SK-N-SH (cell line): ENCODE measurements at regions of chr1 and their contacts with region 1.

Region 1: GRCh38 chr1:10788592-10789006 is 7.8 kb downstream of the CASZ1 start:
- DNase-seq: peak; percentile 86
- H3K4me3 ChIP-seq: no peak overlapping the region
- H3K27ac ChIP-seq: no peak overlapping the region
- H3K4me1 ChIP-seq: peaks cover 3 to 10% of the 10 kb centered on the region in 2 experiments; a peak in 2 of 4 replicates
- H3K27me3 ChIP-seq: peaks cover 51% of the 10 kb centered on the region
- CTCF ChIP-seq: no peak
- EP300 ChIP-seq: no peak
- RAD21 ChIP-seq: peak; percentile 74

Region 2: GRCh38 chr1:10693497-10694273 is 94.9 kb before region 1 on chr1:
- CTCF ChIA-PET with region 1: interaction called, 11 read pairs
- POLR2A ChIA-PET with region 1: no interaction called
- DNase-seq: peak; percentile 74
- H3K4me3 ChIP-seq: peak overlapping the region; percentile 60 to 85
- H3K27ac ChIP-seq: no peak overlapping the region
- H3K4me1 ChIP-seq: peaks cover 9% of the 10 kb centered on the region in 2 experiments; a peak in 1 of 4 replicates
- H3K27me3 ChIP-seq: no peaks in the 10 kb centered on the region
- CTCF ChIP-seq: no peak
- EP300 ChIP-seq: no peak
- RAD21 ChIP-seq: no peak

Region 3: DNA sequence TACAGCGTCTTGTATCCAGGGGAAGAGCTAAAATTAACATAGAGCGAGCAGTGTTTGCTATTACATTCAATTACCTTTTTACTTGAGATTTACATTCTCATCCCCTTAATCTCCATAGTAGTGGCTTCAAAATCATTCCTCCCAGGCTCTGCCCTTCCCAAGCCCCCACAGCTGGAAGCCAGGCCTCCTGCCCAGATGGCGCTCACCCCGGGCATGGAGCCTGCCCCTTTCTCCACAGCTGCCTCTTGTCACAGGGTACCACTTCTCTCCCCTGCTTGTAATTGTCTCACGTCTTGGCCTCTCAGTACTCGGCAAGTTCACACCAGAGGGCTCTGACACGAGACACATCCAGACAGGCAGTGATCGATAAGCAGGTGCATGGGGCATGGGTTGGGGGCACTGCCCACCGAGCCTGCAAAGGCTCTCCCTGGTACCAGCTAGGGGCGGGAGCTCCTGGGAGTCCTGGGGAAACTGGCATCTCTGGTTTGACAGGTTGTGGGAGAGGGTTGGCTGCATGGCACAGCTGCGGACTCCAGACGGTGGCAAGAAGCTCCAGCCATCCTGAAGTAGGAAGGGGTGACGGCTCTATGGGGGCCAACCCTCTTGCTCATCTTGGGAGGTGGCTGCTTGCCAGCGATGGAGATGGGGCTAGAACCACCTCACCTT is 12.3 kb before region 1 on chr1:
- CTCF ChIA-PET with region 1: interaction called, 11 read pairs
- POLR2A ChIA-PET with region 1: no interaction called
- DNase-seq: peak; percentile 70
- H3K4me3 ChIP-seq: no peak overlapping the region
- H3K27ac ChIP-seq: no peak overlapping the region
- H3K4me1 ChIP-seq: peaks cover 0 to 6% of the 10 kb centered on the region in 2 experiments; a peak in 1 of 4 replicates
- H3K27me3 ChIP-seq: 0 out of 2 replicates have a peak, but pooled peaks cover 14% of the 10 kb centered on the region
- CTCF ChIP-seq: no peak
- EP300 ChIP-seq: no peak
- RAD21 ChIP-seq: no peak